WTC11 (cell line): ENCODE measurements at regions of chrX and their contacts with region 1.

Region 1: GRCh38 chrX:18425199-18426003 is at the start of gene CDKL5:
- DNase-seq: peak; percentile 96
- ATAC-seq: peak; percentile 90
- H3K4me3 Mint-ChIP-seq: peak within 1 kb of the TSS; percentile 89
- H3K27ac Mint-ChIP-seq: peak within 1 kb of the TSS; percentile 80
- H3K4me1 Mint-ChIP-seq: peaks cover 24% of the 10 kb centered on the region
- H3K27me3 Mint-ChIP-seq: no peaks in the 10 kb centered on the region; the same call in 1 of the 2 replicates
- CTCF ChIP-seq: no peak
- total RNA-seq, gene CDKL5: 13.0 to 13.6 TPM (median 13.3 TPM) in 3 replicates

Region 2: DNA sequence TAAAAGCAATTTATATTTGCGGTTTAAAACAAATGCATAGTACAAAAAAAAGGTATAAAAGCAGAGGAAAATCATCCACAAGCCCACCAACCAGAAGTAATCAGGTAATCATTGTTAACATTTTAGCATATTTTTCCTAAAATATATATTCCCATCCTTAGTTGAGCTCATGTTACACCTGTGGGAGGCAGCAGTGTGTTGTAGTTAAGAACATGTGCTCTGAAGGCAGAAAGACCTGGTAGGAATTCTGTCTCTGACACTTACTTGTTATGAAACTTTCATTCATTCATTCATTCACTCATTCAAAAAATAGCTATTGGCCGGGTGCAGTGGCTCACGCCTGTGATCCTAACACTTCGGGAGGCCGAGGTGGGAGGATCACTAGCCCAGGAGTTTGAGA is 15.4 kb before region 1 on chrX:
- CTCF ChIA-PET with region 1: interaction called, 10 read pairs
- POLR2A ChIA-PET with region 1: interaction called, 8 read pairs
- DNase-seq: no peak
- ATAC-seq: no peak
- H3K4me3 Mint-ChIP-seq: no peak overlapping the region
- H3K27ac Mint-ChIP-seq: no peak overlapping the region
- H3K4me1 Mint-ChIP-seq: no peaks in the 10 kb centered on the region
- H3K27me3 Mint-ChIP-seq: no peaks in the 10 kb centered on the region
- CTCF ChIP-seq: no peak

Region 3: DNA sequence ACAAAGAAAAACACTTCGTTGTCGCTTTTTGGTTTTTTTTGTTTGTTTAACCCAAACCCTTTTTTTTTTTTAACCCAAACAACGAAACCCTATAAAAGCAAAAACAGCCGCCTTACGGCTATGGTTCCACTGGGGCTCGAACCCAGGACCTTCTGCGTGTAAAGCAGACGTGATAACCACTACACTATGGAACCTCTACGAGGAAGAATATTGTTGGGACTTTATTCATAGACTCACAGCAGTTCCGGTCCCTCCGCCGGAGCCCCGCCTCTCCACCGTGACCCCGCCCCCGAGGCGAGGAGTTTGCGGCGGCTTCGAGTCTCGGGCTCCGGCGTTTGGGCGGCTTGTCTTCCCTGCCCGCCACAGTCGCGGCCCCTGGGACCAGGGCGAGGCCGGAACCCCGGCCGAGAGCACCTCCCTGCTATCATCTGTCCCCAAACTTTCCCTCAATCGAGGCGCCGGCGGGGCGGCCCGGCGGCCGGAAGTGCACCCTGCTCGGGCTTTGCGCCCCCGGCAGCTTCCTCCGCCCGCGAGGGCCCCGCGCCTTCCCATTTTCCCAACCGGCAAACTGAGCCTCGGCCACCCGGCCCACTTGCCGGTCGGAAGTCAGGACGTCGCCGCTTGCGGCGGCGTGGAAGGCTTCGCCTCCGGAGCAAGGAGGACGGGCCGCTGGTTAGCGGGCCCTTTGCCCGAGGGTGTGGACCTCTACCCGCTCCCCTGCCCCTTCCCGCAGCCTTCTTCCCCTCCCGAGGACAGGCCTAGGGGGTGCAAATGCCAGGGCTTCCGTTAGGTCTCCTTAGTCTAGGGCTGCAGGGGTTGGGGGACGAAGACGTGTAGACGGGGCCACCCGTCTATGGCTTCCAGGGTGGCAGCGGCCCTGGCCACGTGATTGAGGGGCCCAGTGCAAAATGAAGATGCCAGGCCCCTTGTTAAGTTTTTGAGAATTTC is 249.7 kb after region 1 on chrX:
- CTCF ChIA-PET with region 1: interaction called, 10 read pairs
- POLR2A ChIA-PET with region 1: interaction called, 3 read pairs
- DNase-seq: peak; percentile 67
- ATAC-seq: peak; percentile 75
- H3K4me3 Mint-ChIP-seq: peak overlapping the region; percentile 70
- H3K27ac Mint-ChIP-seq: no peak overlapping the region
- H3K4me1 Mint-ChIP-seq: peaks cover 11% of the 10 kb centered on the region
- H3K27me3 Mint-ChIP-seq: no peaks in the 10 kb centered on the region
- CTCF ChIP-seq: no peak